Caco-2 (cell line): ENCODE measurements at regions of chr9 and their contacts with region 1.

Region 1: DNA sequence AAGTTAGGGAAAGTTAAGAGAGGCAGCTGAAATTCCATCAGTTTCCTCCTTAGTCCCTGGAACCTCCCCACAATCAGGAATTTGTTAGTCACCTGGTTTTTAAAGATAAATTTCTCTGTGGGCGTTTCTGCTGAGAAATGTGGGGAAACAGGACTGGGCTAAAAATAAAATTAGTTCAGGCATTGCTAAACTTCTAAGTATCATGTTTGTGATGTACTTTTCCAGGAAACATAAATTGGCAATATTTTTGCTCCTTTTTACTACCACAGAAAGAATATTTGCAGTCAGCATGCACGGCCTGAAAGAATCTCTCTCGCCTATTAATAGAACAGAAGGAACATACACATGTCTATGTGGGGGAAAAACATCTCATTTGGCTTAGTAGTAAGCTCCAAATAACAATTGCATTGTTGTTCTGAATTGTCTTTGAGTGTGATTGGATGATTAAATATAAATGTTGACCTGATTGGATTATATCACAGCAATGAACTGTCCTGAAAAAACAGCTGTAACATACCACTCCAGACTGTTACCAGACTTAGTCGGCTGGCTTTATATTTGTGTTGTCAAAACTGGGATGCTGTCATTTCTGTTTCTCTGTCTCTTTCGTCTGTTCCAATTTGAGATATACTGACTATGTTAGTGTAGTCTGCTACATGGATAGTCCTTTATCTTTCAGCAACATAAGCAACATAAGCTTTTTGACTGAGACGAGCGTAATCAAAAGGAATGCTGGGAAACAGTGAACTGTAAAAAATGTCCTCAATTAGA is 12.9 kb downstream of the TJP2 start:
- DNase-seq: no peak
- H3K4me3 ChIP-seq: no peak overlapping the region
- H3K4me3 Mint-ChIP-seq: peak overlapping the region; percentile 35
- H3K27ac Mint-ChIP-seq: peak overlapping the region; percentile 81
- H3K4me1 ChIP-seq: peaks cover 17% of the 10 kb centered on the region
- H3K4me1 Mint-ChIP-seq: peaks cover 3% of the 10 kb centered on the region
- H3K27me3 ChIP-seq: no peaks in the 10 kb centered on the region
- H3K27me3 Mint-ChIP-seq: no peaks in the 10 kb centered on the region
- CTCF ChIP-seq: no peak

Region 2: GRCh38 chr9:69155341-69156030 is 31.5 kb before region 1 on chr9:
- CTCF ChIA-PET with region 1: interaction called, 6 read pairs
- POLR2A ChIA-PET with region 1: no interaction called
- intact Hi-C with region 1: loop called (anchors 5 kb)
- DNase-seq: peak; percentile 18 to 42
- H3K4me3 ChIP-seq: no peak overlapping the region
- H3K4me3 Mint-ChIP-seq: no peak overlapping the region
- H3K27ac Mint-ChIP-seq: peak overlapping the region; percentile 67
- H3K4me1 ChIP-seq: no peaks in the 10 kb centered on the region
- H3K4me1 Mint-ChIP-seq: no peaks in the 10 kb centered on the region
- H3K27me3 ChIP-seq: no peaks in the 10 kb centered on the region
- H3K27me3 Mint-ChIP-seq: no peaks in the 10 kb centered on the region
- CTCF ChIP-seq: no peak